ENCODE measurements at regions of chrX and their contacts with region 1.

Region 1: GRCh38 chrX:38080808-38081207 is 74.5 kb downstream of the SYTL5 start:
- DNase-seq: no peak
- ATAC-seq: no peak
- H3K4me3 ChIP-seq: no peak overlapping the region
- H3K27ac ChIP-seq: no peak overlapping the region
- H3K4me1 ChIP-seq: no peaks in the 10 kb centered on the region
- H3K27me3 ChIP-seq: no peaks in the 10 kb centered on the region
- CTCF ChIP-seq: no peak
- EP300 ChIP-seq: no peak
- POLR2A ChIP-seq: no peak
- RAD21 ChIP-seq: no peak

Region 2: DNA sequence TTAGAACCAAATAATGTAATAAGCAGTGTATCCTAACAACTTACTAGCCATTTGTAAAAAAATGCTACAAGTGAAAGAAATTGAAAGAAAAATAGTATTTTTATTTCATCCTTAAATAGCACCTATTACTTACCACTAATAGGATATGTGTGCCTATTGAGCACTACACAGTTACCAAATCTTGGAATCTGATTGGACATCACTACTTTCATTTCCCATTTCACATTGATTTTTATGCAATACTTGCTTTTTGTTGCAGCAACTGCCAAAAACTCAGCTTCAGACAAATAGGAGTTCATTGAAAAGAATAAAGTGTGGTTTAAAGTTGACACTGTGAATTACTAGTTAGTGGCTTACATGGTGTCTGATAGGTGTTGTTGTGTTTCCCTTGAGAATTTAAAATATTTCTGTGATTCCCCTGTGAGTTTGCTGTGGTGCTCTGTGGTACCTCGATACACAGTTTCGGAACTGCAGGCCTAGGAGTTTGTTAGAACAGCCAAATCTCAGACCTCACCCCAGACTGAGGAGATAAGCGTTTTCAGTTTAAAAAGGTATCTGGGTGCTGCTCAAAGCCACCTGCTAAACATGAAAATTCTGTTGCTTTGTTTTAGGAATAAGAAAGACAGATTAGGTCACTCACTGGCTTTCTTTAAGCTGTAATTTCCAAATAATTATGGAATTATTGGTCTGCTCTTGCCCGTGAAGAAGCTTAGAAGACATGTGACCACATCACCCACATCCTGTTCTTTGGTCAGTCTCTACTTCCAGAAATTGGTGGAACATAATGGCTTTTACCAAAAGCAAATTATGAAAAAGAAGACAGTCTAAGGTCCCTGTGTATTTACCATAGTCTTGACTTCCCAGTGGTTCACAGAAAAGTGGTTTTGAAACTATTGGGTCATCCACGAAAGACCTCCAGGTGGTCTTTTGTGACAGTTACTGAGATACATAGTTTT is 23.3 kb after region 1 on chrX:
- CTCF ChIA-PET with region 1: no interaction called
- POLR2A ChIA-PET with region 1: no interaction called
- in situ Hi-C with region 1: no loop called
- intact Hi-C with region 1: no loop called
- DNase-seq: no peak
- ATAC-seq: no peak
- H3K4me3 ChIP-seq: no peak overlapping the region
- H3K27ac ChIP-seq: no peak overlapping the region
- H3K4me1 ChIP-seq: peaks cover 10% of the 10 kb centered on the region; the same call in 1 of the 2 replicates
- H3K27me3 ChIP-seq: no peaks in the 10 kb centered on the region
- CTCF ChIP-seq: no peak
- EP300 ChIP-seq: no peak
- POLR2A ChIP-seq: no peak
- RAD21 ChIP-seq: no peak

Region 3: DNA sequence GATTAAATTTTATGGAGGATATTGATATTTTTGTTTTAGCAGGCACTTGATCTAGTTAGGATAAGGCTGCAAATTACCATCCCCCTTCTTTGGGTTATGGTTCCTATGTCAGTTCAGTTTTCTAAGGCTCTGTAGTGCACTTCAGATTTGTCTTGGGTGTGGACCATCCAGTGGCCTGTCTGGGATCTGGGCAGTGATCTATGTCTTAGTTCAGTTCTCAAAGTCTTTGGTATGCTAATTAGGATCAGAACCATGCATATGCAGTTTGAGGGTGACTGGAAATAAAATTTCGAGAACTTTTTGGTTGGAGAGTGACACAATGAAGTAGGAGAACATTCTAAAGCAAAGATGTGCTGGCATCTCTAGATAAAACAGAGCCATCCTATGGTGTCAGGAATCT is 1108.6 kb after region 1 on chrX:
- CTCF ChIA-PET with region 1: no interaction called
- POLR2A ChIA-PET with region 1: no interaction called
- in situ Hi-C with region 1: no loop called
- intact Hi-C with region 1: loop called (anchors 10 kb)
- DNase-seq: no peak
- ATAC-seq: no peak
- H3K4me3 ChIP-seq: no peak overlapping the region
- H3K27ac ChIP-seq: no peak overlapping the region
- H3K4me1 ChIP-seq: no peaks in the 10 kb centered on the region
- H3K27me3 ChIP-seq: no peaks in the 10 kb centered on the region
- CTCF ChIP-seq: no peak
- EP300 ChIP-seq: no peak
- POLR2A ChIP-seq: no peak
- RAD21 ChIP-seq: no peak

Measured in HepG2 (cell line).